Activated T-helper 2 cell treated with anti-CD3 and anti-CD28 coated beads, Interferon-gamma antibody, Interleukin-2, Interleukin-4, amounts not matched to agents 10 μg/mL and 5 μg/mL and 100 μg/mL, durations not matched to agents 14 hours and 24 hours and 36 hours (primary cell): ENCODE measurements at regions of chr11 and their contacts with region 1.

Region 1: GRCh38 chr11:62444236-62444833 is 25.5 kb downstream of the SCGB1A1 start:
- DNase-seq: peak; percentile 20
- H3K4me3 Mint-ChIP-seq: peak overlapping the region; percentile 69
- H3K27ac Mint-ChIP-seq: peak overlapping the region; percentile 29
- H3K4me1 Mint-ChIP-seq: peaks cover 12% of the 10 kb centered on the region
- H3K27me3 Mint-ChIP-seq: peaks cover 16% of the 10 kb centered on the region

Region 2: GRCh38 chr11:62394825-62395538 is 49.4 kb before region 1 on chr11:
- intact Hi-C with region 1: loop called (anchors 10 kb)
- DNase-seq: peak; percentile 40
- H3K4me3 Mint-ChIP-seq: no peak overlapping the region
- H3K27ac Mint-ChIP-seq: no peak overlapping the region
- H3K4me1 Mint-ChIP-seq: peaks cover 10% of the 10 kb centered on the region
- H3K27me3 Mint-ChIP-seq: peaks cover under 1% of the 10 kb centered on the region